ENCODE measurements at regions of chr19 and their contacts with region 1.

Region 1: DNA sequence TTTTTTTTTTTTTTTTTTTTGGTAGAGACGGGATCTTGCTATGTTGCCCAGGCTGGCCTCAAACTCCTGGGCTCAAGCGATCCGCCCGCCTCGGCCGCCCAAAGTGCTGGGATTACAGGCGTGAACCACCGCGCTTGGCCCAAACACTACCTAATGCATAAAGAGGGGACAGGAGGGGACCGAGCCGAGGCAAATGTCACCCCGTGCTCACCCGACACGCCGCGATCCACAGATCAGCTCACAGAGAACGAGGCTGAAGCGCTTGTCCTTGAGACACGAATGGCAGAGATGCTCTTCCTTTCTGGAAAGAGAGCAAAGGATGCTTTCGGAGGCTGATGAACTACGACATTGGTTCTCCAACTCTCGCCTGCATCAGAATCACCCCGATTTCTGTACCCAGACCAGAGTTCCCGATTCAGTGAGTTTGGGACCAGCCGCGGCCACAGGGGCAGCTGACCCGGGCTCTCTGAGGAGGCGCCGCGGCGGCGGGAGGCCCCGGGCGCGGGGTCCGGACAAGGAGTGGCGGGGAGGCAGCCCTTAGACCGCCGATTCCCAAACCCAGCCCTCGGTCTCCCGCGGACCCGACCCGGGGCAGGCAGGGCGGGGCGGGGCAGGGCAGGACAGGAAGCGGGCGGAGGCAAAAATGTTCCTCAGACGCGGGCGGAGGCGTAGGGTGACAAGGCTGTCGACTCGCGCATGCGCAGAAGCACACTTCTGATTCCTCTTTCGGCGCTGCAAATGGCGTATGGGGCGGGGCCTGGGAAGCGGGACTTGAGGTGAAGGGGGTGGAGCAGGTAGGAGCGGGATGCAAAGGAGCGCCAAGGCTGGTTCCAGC is at the start of gene ZNF699:
- DNase-seq: peak; percentile 100
- ATAC-seq: peak; percentile 79
- H3K4me3 ChIP-seq: peak within 1 kb of the TSS; percentile 97
- H3K27ac ChIP-seq: peak within 1 kb of the TSS; percentile 88
- H3K4me1 ChIP-seq: peaks cover 12% of the 10 kb centered on the region
- H3K27me3 ChIP-seq: no peaks in the 10 kb centered on the region
- CTCF ChIP-seq: no peak
- total RNA-seq, gene ZNF699: 30.9 and 36.0 TPM in 2 replicates

Region 2: GRCh38 chr19:9086761-9087160 is 222.6 kb before region 1 on chr19 and contains the start of gene OR1M1:
- CTCF ChIA-PET with region 1: no interaction called
- POLR2A ChIA-PET with region 1: no interaction called
- intact Hi-C with region 1: no loop called
- DNase-seq: no peak
- ATAC-seq: no peak
- H3K4me3 ChIP-seq: no peak within 1 kb of the TSS
- H3K27ac ChIP-seq: no peak within 1 kb of the TSS
- H3K4me1 ChIP-seq: no peaks in the 10 kb centered on the region
- H3K27me3 ChIP-seq: peaks cover 53% of the 10 kb centered on the region
- CTCF ChIP-seq: no peak
- total RNA-seq, gene OR1M1: not detected in 2 replicates

Region 3: DNA sequence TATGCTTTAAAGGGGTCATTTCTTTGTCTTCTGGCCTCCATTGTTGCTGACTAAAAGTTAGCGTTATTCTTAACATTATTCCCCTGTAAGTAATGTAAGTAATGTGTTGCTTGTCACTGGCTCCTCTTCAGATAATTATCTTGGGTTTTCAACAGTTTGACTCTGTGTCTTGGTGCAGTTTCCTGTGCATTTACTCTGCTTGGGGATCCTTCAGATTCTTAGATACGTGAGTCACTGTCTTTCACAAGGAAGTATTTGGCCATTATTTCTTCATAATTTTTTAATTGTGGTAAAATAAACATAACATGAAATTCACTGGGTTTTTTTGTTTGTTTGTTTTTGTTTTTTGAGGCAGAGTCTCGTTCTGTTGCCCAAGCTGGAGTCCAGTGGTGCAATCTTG is 144.1 kb before region 1 on chr19:
- CTCF ChIA-PET with region 1: no interaction called
- POLR2A ChIA-PET with region 1: no interaction called
- intact Hi-C with region 1: no loop called
- DNase-seq: no peak
- ATAC-seq: peak; percentile 24; the same call in 1 of the 2 replicates
- H3K4me3 ChIP-seq: no peak overlapping the region
- H3K27ac ChIP-seq: no peak overlapping the region
- H3K4me1 ChIP-seq: no peaks in the 10 kb centered on the region
- H3K27me3 ChIP-seq: no peaks in the 10 kb centered on the region
- CTCF ChIP-seq: no peak

Region 4: DNA sequence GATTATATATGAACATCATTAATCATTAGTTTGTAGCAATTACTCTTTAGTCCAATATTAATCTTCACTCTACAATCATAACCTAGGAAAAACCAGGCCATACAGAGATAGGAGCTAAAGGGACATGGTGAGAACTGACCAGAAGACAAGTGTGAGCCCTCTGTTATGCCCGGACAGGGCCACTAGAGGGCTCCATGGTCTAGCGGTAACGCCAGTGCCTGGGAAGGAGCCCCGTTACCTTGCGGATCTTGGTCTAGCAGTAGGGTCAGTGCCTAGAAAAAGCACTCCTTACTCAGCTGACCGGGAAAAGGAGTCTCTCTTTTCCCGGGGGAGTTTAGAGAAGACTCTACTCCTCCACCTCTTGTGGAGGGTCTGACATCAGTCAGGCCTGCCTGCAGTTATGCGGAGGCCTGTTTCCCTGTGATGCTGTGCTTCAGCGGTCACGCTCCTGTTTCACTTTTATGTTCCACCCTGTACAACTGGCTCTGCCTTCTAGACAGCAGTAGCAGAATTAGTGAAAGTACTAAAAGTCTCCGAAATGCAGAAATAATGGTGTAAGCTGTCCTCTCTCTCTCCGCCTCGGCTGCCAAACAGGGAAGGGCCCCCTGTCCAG is 103.7 kb before region 1 on chr19:
- CTCF ChIA-PET with region 1: no interaction called
- POLR2A ChIA-PET with region 1: no interaction called
- intact Hi-C with region 1: loop called (anchors 1 kb)
- DNase-seq: peak; percentile 89
- ATAC-seq: peak; percentile 94
- H3K4me3 ChIP-seq: peak overlapping the region; percentile 54
- H3K27ac ChIP-seq: no peak overlapping the region
- H3K4me1 ChIP-seq: no peaks in the 10 kb centered on the region
- H3K27me3 ChIP-seq: no peaks in the 10 kb centered on the region
- CTCF ChIP-seq: peak; percentile 84

Region 5: DNA sequence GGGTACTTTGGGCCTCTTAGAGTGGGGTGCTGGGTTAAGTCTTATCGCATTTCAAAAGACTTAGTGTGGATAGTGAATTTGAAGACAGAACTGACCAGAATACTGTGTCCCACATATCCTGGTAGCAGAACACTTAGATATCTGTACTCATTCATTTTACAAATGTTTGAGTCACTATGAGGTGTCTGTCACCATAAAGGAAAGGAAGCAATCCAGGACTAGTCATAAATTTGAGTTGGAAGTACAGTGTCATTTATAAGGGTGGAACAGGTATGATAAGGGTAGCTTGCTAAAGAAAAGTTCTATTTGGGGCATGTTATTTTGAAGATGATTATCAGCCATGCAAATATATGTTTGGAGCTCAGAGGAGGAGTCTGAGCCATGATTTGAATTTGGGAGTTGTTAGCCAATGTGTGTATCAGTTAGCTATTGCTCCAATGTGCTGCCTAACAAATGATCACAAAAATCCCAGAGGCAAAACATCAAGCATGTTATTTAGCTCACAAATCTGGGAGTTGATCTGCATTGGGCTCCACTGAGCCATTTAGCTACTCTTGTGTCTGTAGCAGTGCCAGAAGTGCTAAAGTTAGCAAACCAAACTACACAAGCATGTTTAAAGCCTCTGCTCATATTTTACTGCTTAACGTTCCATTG is 20.0 kb before region 1 on chr19:
- CTCF ChIA-PET with region 1: interaction called, 12 read pairs
- POLR2A ChIA-PET with region 1: no interaction called
- intact Hi-C with region 1: no loop called
- DNase-seq: peak; percentile 57
- ATAC-seq: peak; percentile 53
- H3K4me3 ChIP-seq: peak overlapping the region; percentile 8; the same call in 1 of the 2 replicates
- H3K27ac ChIP-seq: no peak overlapping the region
- H3K4me1 ChIP-seq: no peaks in the 10 kb centered on the region
- H3K27me3 ChIP-seq: no peaks in the 10 kb centered on the region
- CTCF ChIP-seq: no peak

Region 6: GRCh38 chr19:9435279-9436268 is 126.2 kb after region 1 on chr19 and contains the start of gene ZNF266:
- CTCF ChIA-PET with region 1: no interaction called
- POLR2A ChIA-PET with region 1: interaction called, 3 read pairs
- intact Hi-C with region 1: loop called (anchors 5 kb)
- DNase-seq: peak; percentile 97
- ATAC-seq: peak; percentile 90
- H3K4me3 ChIP-seq: peak within 1 kb of the TSS; percentile 85
- H3K27ac ChIP-seq: peak within 1 kb of the TSS; percentile 41
- H3K4me1 ChIP-seq: peaks cover 7% of the 10 kb centered on the region; the same call in 1 of the 2 replicates
- H3K27me3 ChIP-seq: no peaks in the 10 kb centered on the region
- CTCF ChIP-seq: peak; percentile 46
- total RNA-seq, gene ZNF266: 31.9 and 32.8 TPM in 2 replicates

Measured in PC-3 (cell line).